B cell (primary cell): ENCODE measurements at regions of chr3 and their contacts with region 1.

Region 1: GRCh38 chr3:12658593-12659058 is 5.3 kb downstream of the RAF1 start:
- DNase-seq: no peak
- ATAC-seq: no peak
- H3K4me3 ChIP-seq: no peak overlapping the region
- H3K4me3 Mint-ChIP-seq: no peak overlapping the region
- H3K27ac ChIP-seq: no peak overlapping the region
- H3K27ac Mint-ChIP-seq: no peak overlapping the region
- H3K4me1 ChIP-seq: peaks cover 34 to 41% of the 10 kb centered on the region in 2 donors
- H3K4me1 Mint-ChIP-seq: peaks cover 62% of the 10 kb centered on the region
- H3K27me3 ChIP-seq: no peaks in the 10 kb centered on the region
- H3K27me3 Mint-ChIP-seq: no peaks in the 10 kb centered on the region
- CTCF ChIP-seq: no peak

Region 2: GRCh38 chr3:11568503-11569155 is 1090.0 kb before region 1 on chr3:
- CTCF ChIA-PET with region 1: no interaction called
- POLR2A ChIA-PET with region 1: no interaction called
- intact Hi-C with region 1: no loop called
- DNase-seq: no peak
- ATAC-seq: no peak
- H3K4me3 ChIP-seq: no peak overlapping the region
- H3K4me3 Mint-ChIP-seq: no peak overlapping the region
- H3K27ac ChIP-seq: no peak overlapping the region
- H3K27ac Mint-ChIP-seq: no peak overlapping the region
- H3K4me1 ChIP-seq: no peaks in the 10 kb centered on the region
- H3K4me1 Mint-ChIP-seq: no peaks in the 10 kb centered on the region
- H3K27me3 ChIP-seq: no peaks in the 10 kb centered on the region
- H3K27me3 Mint-ChIP-seq: no peaks in the 10 kb centered on the region
- CTCF ChIP-seq: no peak

Region 3: DNA sequence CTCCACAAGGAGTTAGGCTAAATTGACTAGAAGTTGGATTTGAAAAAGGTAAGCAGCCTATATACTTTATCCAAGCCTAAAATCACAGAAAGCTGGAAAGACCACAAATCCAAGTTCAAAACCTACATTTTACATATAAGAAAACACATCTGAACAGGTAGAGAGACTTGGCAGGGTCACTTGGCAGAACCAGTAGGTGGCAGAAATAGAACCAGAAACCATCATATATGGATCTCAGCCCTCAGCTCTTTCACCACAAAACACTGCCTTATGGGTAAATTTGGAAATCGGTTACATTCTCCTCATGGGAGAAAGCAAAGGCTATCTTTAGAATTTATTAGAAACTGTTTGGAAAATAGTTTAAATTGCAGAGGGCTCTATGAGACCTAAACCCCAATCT is 57.6 kb before region 1 on chr3:
- CTCF ChIA-PET with region 1: no interaction called
- POLR2A ChIA-PET with region 1: no interaction called
- intact Hi-C with region 1: loop called (anchors 10 kb)
- DNase-seq: no peak
- ATAC-seq: no peak
- H3K4me3 ChIP-seq: no peak overlapping the region
- H3K4me3 Mint-ChIP-seq: no peak overlapping the region
- H3K27ac ChIP-seq: no peak overlapping the region
- H3K27ac Mint-ChIP-seq: no peak overlapping the region
- H3K4me1 ChIP-seq: no peaks in the 10 kb centered on the region
- H3K4me1 Mint-ChIP-seq: no peaks in the 10 kb centered on the region
- H3K27me3 ChIP-seq: no peaks in the 10 kb centered on the region
- H3K27me3 Mint-ChIP-seq: no peaks in the 10 kb centered on the region
- CTCF ChIP-seq: no peak

Region 4: DNA sequence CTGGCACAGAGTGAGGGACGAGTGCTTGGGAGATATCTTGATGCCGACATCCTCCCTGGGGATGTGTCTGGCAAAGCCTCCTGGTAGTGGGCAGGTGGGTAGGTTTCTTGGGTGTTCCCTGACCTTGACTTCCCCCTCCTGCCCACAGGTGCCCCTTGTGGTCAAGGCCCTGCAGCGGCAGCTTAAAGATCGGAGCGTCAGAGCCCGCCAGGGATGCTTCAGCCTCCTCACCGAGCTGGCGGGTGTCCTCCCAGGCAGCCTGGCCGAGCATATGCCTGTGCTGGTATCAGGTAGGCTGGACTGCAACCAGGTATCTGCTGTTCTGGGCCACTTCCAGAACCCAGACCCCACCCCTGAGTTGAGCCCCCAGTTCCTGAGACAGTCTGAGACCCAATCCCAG is 157.1 kb after region 1 on chr3:
- CTCF ChIA-PET with region 1: no interaction called
- POLR2A ChIA-PET with region 1: no interaction called
- intact Hi-C with region 1: no loop called
- DNase-seq: no peak
- ATAC-seq: no peak
- H3K4me3 ChIP-seq: no peak overlapping the region
- H3K4me3 Mint-ChIP-seq: no peak overlapping the region
- H3K27ac ChIP-seq: no peak overlapping the region
- H3K27ac Mint-ChIP-seq: no peak overlapping the region
- H3K4me1 ChIP-seq: peaks cover 9 to 11% of the 10 kb centered on the region in 2 donors
- H3K4me1 Mint-ChIP-seq: peaks cover 6% of the 10 kb centered on the region
- H3K27me3 ChIP-seq: peaks cover 0 to 7% (median 0%) of the 10 kb centered on the region in 4 experiments
- H3K27me3 Mint-ChIP-seq: no peaks in the 10 kb centered on the region
- CTCF ChIP-seq: no peak